CD8-positive, alpha-beta T cell (primary cell): ENCODE measurements at regions of chr20 and their contacts with region 1.

Region 1: DNA sequence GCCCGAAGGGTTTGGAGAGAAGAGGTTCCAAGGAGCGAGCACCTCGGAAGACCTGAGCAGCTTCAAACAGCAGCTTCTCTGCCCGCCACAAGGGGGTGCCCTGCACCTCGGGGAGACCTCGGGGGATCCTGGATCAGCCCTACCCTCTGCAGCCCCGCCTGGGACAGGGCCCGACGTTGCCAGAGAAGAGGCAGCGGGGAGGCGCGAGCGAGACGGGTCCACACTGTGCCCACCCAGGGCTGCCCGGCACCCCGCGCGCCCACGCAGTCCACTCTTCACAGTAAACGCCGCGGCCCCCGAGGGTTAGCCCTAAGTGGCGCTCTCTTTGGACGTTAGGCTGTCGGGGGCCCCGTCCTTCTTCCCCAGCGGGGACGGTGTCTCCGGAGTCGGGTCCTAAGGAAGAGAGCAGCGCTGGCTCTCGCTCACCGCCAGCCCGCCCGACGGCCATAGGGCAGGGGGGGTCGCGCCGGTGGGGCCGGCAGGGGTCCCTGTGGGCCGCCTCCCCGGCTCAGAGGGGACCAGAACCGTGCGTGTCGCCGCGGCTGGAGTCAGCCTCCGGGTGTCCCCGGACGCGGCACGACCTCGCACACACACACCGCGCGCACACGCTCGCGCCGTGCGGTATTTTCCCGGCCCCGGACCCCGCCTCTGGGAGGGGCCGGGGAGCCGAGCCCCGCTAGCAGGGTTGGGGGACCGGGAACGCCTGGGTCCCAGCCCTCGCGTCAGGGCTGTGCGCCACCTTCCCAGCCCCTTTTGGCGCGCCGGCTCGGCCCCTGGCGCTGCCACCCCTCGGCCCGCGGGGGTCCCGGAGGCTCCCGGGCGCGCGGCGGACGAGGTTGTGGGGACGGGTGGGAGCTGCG is 929 bp downstream of the CDH22 start:
- DNase-seq: peak; percentile 44 to 85 (median 77)
- ATAC-seq: peak; percentile 90
- H3K4me3 ChIP-seq: peak overlapping the region; percentile 32 to 37
- H3K4me3 Mint-ChIP-seq: peak overlapping the region; percentile 64
- H3K27ac ChIP-seq: no peak overlapping the region
- H3K27ac Mint-ChIP-seq: no peak overlapping the region
- H3K4me1 ChIP-seq: peaks cover 14% of the 10 kb centered on the region
- H3K4me1 Mint-ChIP-seq: peaks cover 14% of the 10 kb centered on the region
- H3K27me3 ChIP-seq: peaks cover 22 to 27% of the 10 kb centered on the region in 2 experiments
- H3K27me3 Mint-ChIP-seq: peaks cover 63% of the 10 kb centered on the region
- CTCF ChIP-seq: peak; percentile 86

Region 2: DNA sequence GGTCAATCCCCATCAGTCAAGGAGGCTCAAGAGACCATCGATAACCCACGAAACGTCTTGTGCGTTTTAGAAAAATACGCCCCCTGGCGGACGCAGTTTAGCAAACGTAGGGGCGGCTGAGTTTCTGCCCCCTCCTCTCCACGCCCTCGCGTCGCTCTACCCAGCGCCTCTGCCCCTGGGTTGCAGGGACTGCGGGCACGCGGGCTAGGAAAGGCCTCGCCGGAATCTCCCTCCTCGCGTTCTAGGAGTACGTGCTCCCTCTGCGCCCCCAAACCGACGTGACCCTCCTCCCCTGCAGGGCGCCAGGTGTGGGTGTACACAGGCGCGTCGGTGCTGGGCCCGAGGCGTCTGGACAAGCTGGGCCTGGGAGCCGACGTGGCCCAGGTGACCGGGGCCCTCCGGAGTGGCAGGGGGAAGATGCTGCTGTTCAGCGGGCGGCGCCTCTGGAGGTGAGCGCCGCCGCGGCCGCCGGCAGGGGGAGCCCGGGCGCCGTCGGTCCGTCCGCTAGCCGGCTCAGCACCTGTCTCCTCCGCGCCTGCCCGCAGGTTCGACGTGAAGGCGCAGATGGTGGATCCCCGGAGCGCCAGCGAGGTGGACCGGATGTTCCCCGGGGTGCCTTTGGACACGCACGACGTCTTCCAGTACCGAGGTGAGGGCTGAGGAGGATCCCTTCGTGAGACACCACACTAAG is 293.4 kb before region 1 on chr20:
- CTCF ChIA-PET with region 1: interaction called, 3 read pairs
- POLR2A ChIA-PET with region 1: no interaction called
- intact Hi-C with region 1: loop called in 1 of 2 experiments (anchors 2 kb)
- DNase-seq: peak; percentile 44 to 85 (median 73)
- ATAC-seq: peak; percentile 60
- H3K4me3 ChIP-seq: peak overlapping the region; percentile 22 to 34
- H3K4me3 Mint-ChIP-seq: peak overlapping the region; percentile 15
- H3K27ac ChIP-seq: no peak overlapping the region
- H3K27ac Mint-ChIP-seq: no peak overlapping the region
- H3K4me1 ChIP-seq: peaks cover 40% of the 10 kb centered on the region
- H3K4me1 Mint-ChIP-seq: peaks cover 46% of the 10 kb centered on the region
- H3K27me3 ChIP-seq: peaks cover 34 to 44% of the 10 kb centered on the region in 2 experiments
- H3K27me3 Mint-ChIP-seq: peaks cover 76% of the 10 kb centered on the region
- CTCF ChIP-seq: peak; percentile 94

Region 3: DNA sequence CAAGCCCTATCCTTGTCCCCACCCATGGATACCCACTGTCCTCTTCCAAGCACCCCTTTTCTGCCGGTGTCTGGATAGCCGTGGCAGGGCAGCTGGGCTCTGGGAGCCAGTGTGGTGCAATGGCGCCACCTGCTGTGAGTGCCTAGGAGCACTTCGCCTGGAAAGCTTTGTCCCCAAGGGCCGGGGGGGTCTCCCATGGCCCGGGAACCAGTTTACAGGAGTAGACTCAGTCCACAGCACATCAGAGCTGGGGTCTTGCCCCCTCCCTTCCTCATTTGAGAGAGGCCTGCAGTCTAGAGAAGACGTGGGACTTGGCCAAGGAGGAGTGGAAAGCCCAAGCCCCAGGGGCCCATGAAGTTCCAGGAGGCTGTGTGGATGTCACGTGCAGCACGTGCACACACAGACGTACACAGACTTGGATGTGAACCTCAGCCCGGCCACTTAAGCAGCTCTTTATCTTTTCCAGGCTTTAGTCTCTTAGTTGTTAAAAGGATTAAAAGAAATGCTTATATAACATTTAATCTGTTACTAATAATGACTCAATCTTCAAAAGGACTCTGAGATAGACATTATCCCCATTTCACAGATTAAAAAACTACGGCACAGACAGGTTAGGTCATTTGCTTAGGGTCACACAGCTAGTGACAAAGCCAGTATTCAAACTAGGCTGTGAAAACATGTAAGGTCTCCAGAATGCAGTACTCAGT is 41.8 kb after region 1 on chr20:
- CTCF ChIA-PET with region 1: interaction called, 18 read pairs
- POLR2A ChIA-PET with region 1: interaction called, 3 read pairs
- intact Hi-C with region 1: loop called (anchors 1 kb)
- DNase-seq: peak in 7 of 9 experiments; percentile 13 to 64 (median 49)
- ATAC-seq: peak; percentile 65
- H3K4me3 ChIP-seq: no peak overlapping the region
- H3K4me3 Mint-ChIP-seq: no peak overlapping the region
- H3K27ac ChIP-seq: no peak overlapping the region
- H3K27ac Mint-ChIP-seq: no peak overlapping the region
- H3K4me1 ChIP-seq: no peaks in the 10 kb centered on the region
- H3K4me1 Mint-ChIP-seq: peaks cover 18% of the 10 kb centered on the region
- H3K27me3 ChIP-seq: no peaks in the 10 kb centered on the region
- H3K27me3 Mint-ChIP-seq: no peaks in the 10 kb centered on the region
- CTCF ChIP-seq: peak; percentile 56

Region 4: DNA sequence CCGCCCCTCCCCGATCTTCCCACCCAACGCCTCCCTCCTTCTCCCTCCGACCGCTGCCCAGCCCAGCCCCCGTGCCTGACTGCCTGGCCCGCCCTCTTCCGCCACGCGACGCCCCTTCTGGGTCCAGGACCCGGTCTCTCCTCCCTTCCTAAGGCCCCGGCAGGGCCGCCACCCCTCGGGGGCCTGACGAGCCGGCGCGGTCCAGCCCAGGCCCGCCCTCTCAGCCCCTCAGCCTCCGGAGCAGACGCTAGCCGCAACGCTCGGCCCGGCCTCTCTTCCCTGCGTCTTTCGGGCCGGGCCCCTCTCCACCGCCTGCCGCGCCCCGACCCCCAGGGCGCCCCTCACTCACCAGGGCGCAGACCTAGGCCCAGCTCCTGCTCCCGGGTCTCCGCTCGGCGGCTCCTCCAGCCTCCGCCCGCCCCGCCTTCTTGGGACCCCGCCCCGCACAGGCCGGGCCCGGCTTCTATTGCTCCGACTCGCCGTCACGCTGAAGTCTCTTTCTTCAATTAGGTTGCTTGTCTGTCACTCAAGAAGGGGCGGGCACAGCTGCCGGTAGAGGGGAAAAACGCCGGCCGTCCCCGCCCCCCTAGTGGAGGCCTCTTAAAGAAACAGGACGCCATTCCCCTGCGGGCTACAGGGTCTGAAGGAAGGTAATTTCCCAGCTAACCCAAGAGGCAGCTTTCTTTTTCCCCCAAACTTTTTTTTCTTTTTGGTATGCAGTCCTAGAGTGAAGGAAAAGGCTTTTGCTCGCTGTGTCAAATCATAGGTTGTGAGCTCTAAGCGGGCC is 99.0 kb after region 1 on chr20 and contains the start of gene ELMO2:
- CTCF ChIA-PET with region 1: interaction called, 39 read pairs
- POLR2A ChIA-PET with region 1: interaction called, 8 read pairs
- intact Hi-C with region 1: loop called (anchors 1 kb)
- DNase-seq: peak; percentile 89 to 98 (median 96)
- ATAC-seq: peak; percentile 90
- H3K4me3 ChIP-seq: peak within 1 kb of the TSS; percentile 89 to 91
- H3K4me3 Mint-ChIP-seq: peak within 1 kb of the TSS; percentile 99
- H3K27ac ChIP-seq: peak within 1 kb of the TSS; percentile 72 to 82
- H3K27ac Mint-ChIP-seq: peak within 1 kb of the TSS; percentile 98
- H3K4me1 ChIP-seq: peaks cover 53% of the 10 kb centered on the region
- H3K4me1 Mint-ChIP-seq: peaks cover 70% of the 10 kb centered on the region
- H3K27me3 ChIP-seq: no peaks in the 10 kb centered on the region
- H3K27me3 Mint-ChIP-seq: no peaks in the 10 kb centered on the region
- CTCF ChIP-seq: no peak
- total RNA-seq, gene ELMO2: 59.2 to 62.8 TPM

Region 5: GRCh38 chr20:46423882-46424482 is 116.6 kb after region 1 on chr20:
- CTCF ChIA-PET with region 1: interaction called, 10 read pairs
- POLR2A ChIA-PET with region 1: no interaction called
- intact Hi-C with region 1: no loop called
- DNase-seq: no peak
- ATAC-seq: no peak
- H3K4me3 ChIP-seq: no peak overlapping the region
- H3K4me3 Mint-ChIP-seq: no peak overlapping the region
- H3K27ac ChIP-seq: no peak overlapping the region
- H3K27ac Mint-ChIP-seq: no peak overlapping the region
- H3K4me1 ChIP-seq: no peaks in the 10 kb centered on the region
- H3K4me1 Mint-ChIP-seq: no peaks in the 10 kb centered on the region
- H3K27me3 ChIP-seq: peaks cover 0 to 8% of the 10 kb centered on the region in 2 experiments
- H3K27me3 Mint-ChIP-seq: peaks cover 42% of the 10 kb centered on the region
- CTCF ChIP-seq: no peak

Region 6: GRCh38 chr20:46485431-46485830 is 178.1 kb after region 1 on chr20:
- CTCF ChIA-PET with region 1: interaction called, 3 read pairs
- POLR2A ChIA-PET with region 1: no interaction called
- intact Hi-C with region 1: loop called in 1 of 2 experiments (anchors 5 kb)
- DNase-seq: no peak
- ATAC-seq: no peak
- H3K4me3 ChIP-seq: no peak overlapping the region
- H3K4me3 Mint-ChIP-seq: no peak overlapping the region
- H3K27ac ChIP-seq: no peak overlapping the region
- H3K27ac Mint-ChIP-seq: no peak overlapping the region
- H3K4me1 ChIP-seq: no peaks in the 10 kb centered on the region
- H3K4me1 Mint-ChIP-seq: no peaks in the 10 kb centered on the region
- H3K27me3 ChIP-seq: peaks cover 0 to 4% of the 10 kb centered on the region in 2 experiments
- H3K27me3 Mint-ChIP-seq: peaks cover 26% of the 10 kb centered on the region
- CTCF ChIP-seq: no peak